A549 (cell line): ENCODE measurements at regions of chr3 and their contacts with region 1.

Region 1: GRCh38 chr3:157081681-157082210 is 78.2 kb downstream of the CCNL1 start:
- DNase-seq: peak; percentile 85 to 91
- ATAC-seq: peak; percentile 98 to 99
- H3K4me3 ChIP-seq: no peak overlapping the region
- H3K27ac ChIP-seq: peak overlapping the region; percentile 49 to 72; a peak in 5 of 6 replicates
- H3K4me1 ChIP-seq: peaks cover 7% of the 10 kb centered on the region; the same call in 1 of the 3 replicates
- CTCF ChIP-seq: peak; percentile 90
- EP300 ChIP-seq: no peak
- POLR2A ChIP-seq: no peak
- RAD21 ChIP-seq: peak; percentile 98

Region 2: DNA sequence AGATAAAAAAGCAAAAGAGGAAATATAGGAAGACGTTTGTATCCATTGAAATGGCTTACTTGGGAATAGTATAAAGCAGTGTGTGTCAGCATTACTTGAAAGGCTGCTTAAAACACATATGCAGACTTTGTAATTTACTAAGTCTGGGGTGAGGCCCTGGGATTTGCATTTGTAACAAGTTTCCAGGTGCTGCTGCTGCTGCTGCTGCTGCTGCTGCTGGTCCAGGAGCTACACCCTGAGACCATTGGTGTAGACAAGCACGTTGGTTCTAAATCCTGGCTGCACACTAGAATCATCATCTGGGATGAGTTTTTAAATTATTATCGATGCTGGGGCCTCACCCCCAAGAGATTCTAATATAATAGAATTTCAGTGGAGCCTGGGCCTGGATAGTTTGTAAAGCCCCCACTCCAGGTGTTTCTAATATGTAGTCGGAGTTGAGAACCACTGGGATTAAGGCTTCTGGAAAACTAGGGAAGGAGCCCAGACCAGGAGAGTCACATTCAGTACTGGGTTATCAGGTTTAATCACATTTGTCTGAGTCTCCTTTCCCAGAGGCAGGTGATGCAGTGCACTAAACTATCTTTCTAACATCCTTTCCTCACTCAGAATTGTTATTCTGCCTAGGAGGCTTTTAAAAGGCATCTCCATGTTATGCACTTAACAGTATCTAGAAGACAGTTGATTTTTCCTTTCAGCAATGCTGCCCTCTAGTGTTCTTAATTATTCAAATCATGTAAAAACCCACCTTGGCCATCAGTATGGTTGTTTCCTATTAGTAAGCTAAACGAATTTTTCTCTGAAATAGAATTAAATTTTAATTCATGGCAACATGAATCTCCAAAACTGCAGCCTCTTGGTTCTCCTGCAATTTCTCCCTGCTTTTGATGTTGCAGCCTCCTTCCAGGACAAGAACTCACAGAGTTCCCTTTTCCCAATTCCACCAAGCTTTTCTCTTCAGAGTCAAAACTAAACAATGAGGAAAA is 572.3 kb before region 1 on chr3:
- CTCF ChIA-PET with region 1: interaction called, 13 read pairs
- POLR2A ChIA-PET with region 1: no interaction called
- DNase-seq: peak; percentile 51 to 63
- ATAC-seq: peak; percentile 78 to 93; a peak in 5 of 6 replicates
- H3K4me3 ChIP-seq: no peak overlapping the region
- H3K27ac ChIP-seq: no peak overlapping the region
- H3K4me1 ChIP-seq: peaks cover 11% of the 10 kb centered on the region
- CTCF ChIP-seq: peak; percentile 80
- EP300 ChIP-seq: no peak
- POLR2A ChIP-seq: no peak
- RAD21 ChIP-seq: peak; percentile 69 to 70

Region 3: GRCh38 chr3:156535162-156535627 is 546.6 kb before region 1 on chr3:
- CTCF ChIA-PET with region 1: interaction called, 23 read pairs
- POLR2A ChIA-PET with region 1: no interaction called
- DNase-seq: peak; percentile 62 to 87
- ATAC-seq: peak; percentile 93 to 94
- H3K4me3 ChIP-seq: no peak overlapping the region
- H3K27ac ChIP-seq: peak overlapping the region; percentile 31 to 73
- H3K4me1 ChIP-seq: peaks cover 41% of the 10 kb centered on the region
- CTCF ChIP-seq: peak; percentile 38
- EP300 ChIP-seq: no peak
- POLR2A ChIP-seq: no peak
- RAD21 ChIP-seq: peak; percentile 43 to 60; a peak in 4 of 5 replicates

Region 4: GRCh38 chr3:157122116-157122515 is 40.4 kb after region 1 on chr3:
- CTCF ChIA-PET with region 1: interaction called, 72 read pairs
- POLR2A ChIA-PET with region 1: no interaction called
- DNase-seq: peak; percentile 39 to 60
- ATAC-seq: peak; percentile 79 to 80
- H3K4me3 ChIP-seq: no peak overlapping the region
- H3K27ac ChIP-seq: peak overlapping the region; percentile 59 to 64; a peak in 4 of 6 replicates
- H3K4me1 ChIP-seq: peaks cover 51% of the 10 kb centered on the region
- CTCF ChIP-seq: no peak
- EP300 ChIP-seq: no peak
- POLR2A ChIP-seq: no peak
- RAD21 ChIP-seq: no peak

Region 5: DNA sequence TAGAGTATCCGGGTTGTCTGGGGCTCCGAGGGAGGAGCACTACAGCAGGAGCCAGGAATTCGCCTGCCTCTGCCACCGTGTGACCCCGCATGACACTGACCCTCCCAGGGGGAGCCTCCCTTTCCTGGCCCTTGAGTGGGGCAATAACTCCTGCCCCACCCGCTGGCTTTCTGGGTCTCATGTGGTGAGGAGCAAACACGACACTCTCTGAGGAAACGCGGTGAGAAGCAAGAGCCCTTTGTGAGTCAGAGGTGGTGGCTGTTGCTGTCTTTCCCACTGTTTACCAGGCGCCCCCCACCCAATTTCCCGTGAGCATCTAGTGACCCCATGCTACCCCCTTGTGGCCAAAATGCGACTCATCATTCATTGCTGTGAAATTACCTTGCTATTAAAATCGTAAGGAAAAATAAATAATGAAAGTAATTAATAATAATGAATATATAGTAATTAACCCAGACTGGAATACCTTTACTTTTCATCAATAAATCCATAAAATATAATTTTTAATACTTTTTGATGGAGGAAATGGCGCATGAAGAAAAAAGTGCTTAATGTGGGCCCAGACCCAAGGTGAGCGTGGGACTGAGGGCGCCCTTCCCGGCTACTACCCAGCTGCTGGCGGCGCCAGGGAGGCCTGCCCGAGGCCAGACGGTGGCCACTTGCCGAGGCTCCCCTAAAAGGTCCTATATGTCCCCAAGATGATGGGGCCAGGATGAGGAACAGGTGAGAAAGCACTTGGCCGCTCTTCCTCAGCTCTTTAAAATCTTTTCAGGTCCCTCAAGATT is 48.9 kb after region 1 on chr3:
- CTCF ChIA-PET with region 1: interaction called, 72 read pairs
- POLR2A ChIA-PET with region 1: no interaction called
- DNase-seq: peak; percentile 75 to 85
- ATAC-seq: peak; percentile 60 to 68
- H3K4me3 ChIP-seq: peak overlapping the region; percentile 2; the same call in 1 of the 3 replicates
- H3K27ac ChIP-seq: peak overlapping the region; percentile 77 to 80
- H3K4me1 ChIP-seq: peaks cover 66% of the 10 kb centered on the region
- CTCF ChIP-seq: peak; percentile 83
- EP300 ChIP-seq: peak in 1 of 2 experiments; percentile 44; a peak in 1 of 5 replicates
- POLR2A ChIP-seq: no peak
- RAD21 ChIP-seq: peak; percentile 77 to 87